B cell (primary cell): ENCODE measurements at regions of chr11 and their contacts with region 1.

Region 1: GRCh38 chr11:6419009-6419631 is at the start of gene APBB1:
- DNase-seq: peak; percentile 87
- ATAC-seq: peak; percentile 83
- H3K4me3 ChIP-seq: peak within 1 kb of the TSS; percentile 27 to 85 (median 71)
- H3K4me3 Mint-ChIP-seq: peak within 1 kb of the TSS; percentile 85
- H3K27ac ChIP-seq: peak within 1 kb of the TSS; percentile 5 to 66
- H3K27ac Mint-ChIP-seq: peak within 1 kb of the TSS; percentile 76
- H3K4me1 ChIP-seq: peaks cover 29 to 32% of the 10 kb centered on the region in 2 donors
- H3K4me1 Mint-ChIP-seq: peaks cover 7% of the 10 kb centered on the region
- H3K27me3 ChIP-seq: peaks cover 0 to 8% (median 7%) of the 10 kb centered on the region in 4 experiments
- H3K27me3 Mint-ChIP-seq: peaks cover 28% of the 10 kb centered on the region
- CTCF ChIP-seq: peak; percentile 17
- total RNA-seq, gene APBB1: 31.4 and 32.5 TPM in 2 replicates

Region 2: GRCh38 chr11:6238902-6239301 is 180.2 kb before region 1 on chr11 and contains the start of gene CNGA4:
- CTCF ChIA-PET with region 1: no interaction called
- POLR2A ChIA-PET with region 1: no interaction called
- intact Hi-C with region 1: no loop called
- DNase-seq: no peak
- ATAC-seq: no peak
- H3K4me3 ChIP-seq: no peak within 1 kb of the TSS
- H3K4me3 Mint-ChIP-seq: no peak within 1 kb of the TSS
- H3K27ac ChIP-seq: no peak within 1 kb of the TSS
- H3K27ac Mint-ChIP-seq: no peak within 1 kb of the TSS
- H3K4me1 ChIP-seq: peaks cover 2 to 8% of the 10 kb centered on the region in 2 donors
- H3K4me1 Mint-ChIP-seq: peaks cover 13% of the 10 kb centered on the region
- H3K27me3 ChIP-seq: peaks cover 0 to 21% (median 3%) of the 10 kb centered on the region in 4 experiments
- H3K27me3 Mint-ChIP-seq: peaks cover 28% of the 10 kb centered on the region
- CTCF ChIP-seq: no peak
- total RNA-seq, gene CNGA4: 0.22 and 0.79 TPM in 2 replicates

Region 3: GRCh38 chr11:6402561-6402981 is 16.5 kb before region 1 on chr11:
- CTCF ChIA-PET with region 1: interaction called, 13 read pairs
- POLR2A ChIA-PET with region 1: interaction called, 5 read pairs
- intact Hi-C with region 1: loop called (anchors 1 kb)
- DNase-seq: peak; percentile 81
- ATAC-seq: peak; percentile 83
- H3K4me3 ChIP-seq: peak overlapping the region in 4 of 5 experiments; percentile 10 to 51 (median 34)
- H3K4me3 Mint-ChIP-seq: peak overlapping the region; percentile 80
- H3K27ac ChIP-seq: peak overlapping the region; percentile 60 to 62
- H3K27ac Mint-ChIP-seq: peak overlapping the region; percentile 90
- H3K4me1 ChIP-seq: peaks cover 39 to 43% of the 10 kb centered on the region in 2 donors
- H3K4me1 Mint-ChIP-seq: peaks cover 59% of the 10 kb centered on the region
- H3K27me3 ChIP-seq: no peaks in the 10 kb centered on the region
- H3K27me3 Mint-ChIP-seq: no peaks in the 10 kb centered on the region
- CTCF ChIP-seq: no peak

Region 4: GRCh38 chr11:6468712-6469495 is 49.8 kb after region 1 on chr11:
- CTCF ChIA-PET with region 1: no interaction called
- POLR2A ChIA-PET with region 1: no interaction called
- intact Hi-C with region 1: no loop called
- DNase-seq: no peak
- ATAC-seq: no peak
- H3K4me3 ChIP-seq: no peak overlapping the region
- H3K4me3 Mint-ChIP-seq: no peak overlapping the region
- H3K27ac ChIP-seq: no peak overlapping the region
- H3K27ac Mint-ChIP-seq: no peak overlapping the region
- H3K4me1 ChIP-seq: peaks cover 8 to 12% of the 10 kb centered on the region in 2 donors
- H3K4me1 Mint-ChIP-seq: peaks cover 14% of the 10 kb centered on the region
- H3K27me3 ChIP-seq: peaks cover 0 to 5% (median 0%) of the 10 kb centered on the region in 4 experiments
- H3K27me3 Mint-ChIP-seq: no peaks in the 10 kb centered on the region
- CTCF ChIP-seq: no peak

Region 5: DNA sequence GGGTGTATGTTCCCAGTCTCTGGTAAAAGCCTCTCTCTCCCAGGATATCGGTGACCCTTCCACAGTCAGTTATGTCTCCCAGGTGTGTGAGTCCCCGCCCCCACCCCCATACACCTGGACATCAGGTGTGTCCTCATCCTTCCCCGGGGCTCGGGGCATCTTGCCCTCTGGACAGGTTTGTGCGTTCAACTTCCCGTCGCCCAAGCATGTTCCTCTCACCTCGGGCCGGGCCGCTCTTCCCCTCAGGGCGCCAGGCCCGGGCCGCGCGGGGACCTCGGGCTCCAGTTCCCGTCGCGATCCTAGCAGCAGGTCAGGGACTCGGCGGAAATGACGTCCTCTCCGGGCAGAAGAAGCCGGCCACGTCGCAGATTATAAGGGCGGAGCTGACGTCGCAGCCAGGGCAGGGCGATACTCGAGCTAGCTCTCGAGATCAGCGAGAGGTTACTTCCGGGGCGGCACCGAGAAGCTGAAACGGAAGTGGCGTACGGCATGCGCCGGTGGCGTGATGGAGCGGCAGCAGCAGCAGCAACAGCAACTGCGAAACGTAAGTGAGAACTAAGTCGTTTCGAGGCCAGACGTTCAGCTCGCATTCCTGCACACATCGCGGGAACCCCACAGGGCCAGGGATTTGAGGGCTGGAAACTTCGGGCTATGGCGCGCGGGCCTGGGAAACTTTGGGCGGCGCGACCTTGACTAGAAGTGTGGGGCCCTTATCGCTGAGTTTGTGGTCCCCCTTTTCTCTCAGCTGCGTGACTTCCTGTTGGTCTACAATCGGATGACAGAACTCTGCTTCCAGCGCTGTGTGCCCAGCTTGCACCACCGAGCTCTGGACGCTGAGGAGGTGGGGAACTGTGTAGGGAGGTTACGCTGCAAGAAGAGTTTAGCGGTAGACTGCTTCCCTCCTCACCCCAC is 62.1 kb after region 1 on chr11 and contains the starts of genes ARFIP2 and TIMM10B:
- CTCF ChIA-PET with region 1: no interaction called
- POLR2A ChIA-PET with region 1: interaction called, 5 read pairs
- intact Hi-C with region 1: loop called (anchors 1 kb)
- DNase-seq: peak; percentile 98
- ATAC-seq: peak; percentile 96
- H3K4me3 ChIP-seq: peak within 1 kb of the TSS; percentile 26 to 92 (median 83)
- H3K4me3 Mint-ChIP-seq: peak within 1 kb of the TSS; percentile 97
- H3K27ac ChIP-seq: peak within 1 kb of the TSS; percentile 90 to 96
- H3K27ac Mint-ChIP-seq: peak within 1 kb of the TSS; percentile 97
- H3K4me1 ChIP-seq: peaks cover 20 to 27% of the 10 kb centered on the region in 2 donors
- H3K4me1 Mint-ChIP-seq: peaks cover 39% of the 10 kb centered on the region
- H3K27me3 ChIP-seq: no peaks in the 10 kb centered on the region
- H3K27me3 Mint-ChIP-seq: no peaks in the 10 kb centered on the region
- CTCF ChIP-seq: no peak
- total RNA-seq, gene ARFIP2: 46.8 and 47.5 TPM in 2 replicates
- total RNA-seq, gene TIMM10B: 62.1 and 63.7 TPM in 2 replicates